Right ventricle myocardium inferior (tissue), 1 donor: ENCODE measurements at regions of chr1 and their contacts with region 1.

Region 1: GRCh38 chr1:86825319-86825718 is 88.6 kb downstream of the SELENOF start:
- DNase-seq: no peak
- ATAC-seq: no peak

Region 2: GRCh38 chr1:86774305-86775295 is 50.7 kb before region 1 on chr1:
- intact Hi-C with region 1: loop called (anchors 5 kb)
- DNase-seq: peak; percentile 85
- ATAC-seq: peak; percentile 93